T-cell (primary cell): ENCODE measurements at regions of chr5 and their contacts with region 1.

Region 1: GRCh38 chr5:42514754-42515153 is 91.5 kb downstream of the GHR start:
- DNase-seq: peak in 1 of 35 experiments; percentile 22
- ATAC-seq: no peak
- H3K4me3 ChIP-seq: no peak overlapping the region
- H3K4me3 Mint-ChIP-seq: no peak overlapping the region
- H3K27ac ChIP-seq: no peak overlapping the region
- H3K27ac Mint-ChIP-seq: no peak overlapping the region
- H3K4me1 ChIP-seq: no peaks in the 10 kb centered on the region
- H3K4me1 Mint-ChIP-seq: no peaks in the 10 kb centered on the region
- H3K27me3 ChIP-seq: no peaks in the 10 kb centered on the region
- H3K27me3 Mint-ChIP-seq: peaks cover 2 to 3% of the 10 kb centered on the region in 2 donors

Region 2: DNA sequence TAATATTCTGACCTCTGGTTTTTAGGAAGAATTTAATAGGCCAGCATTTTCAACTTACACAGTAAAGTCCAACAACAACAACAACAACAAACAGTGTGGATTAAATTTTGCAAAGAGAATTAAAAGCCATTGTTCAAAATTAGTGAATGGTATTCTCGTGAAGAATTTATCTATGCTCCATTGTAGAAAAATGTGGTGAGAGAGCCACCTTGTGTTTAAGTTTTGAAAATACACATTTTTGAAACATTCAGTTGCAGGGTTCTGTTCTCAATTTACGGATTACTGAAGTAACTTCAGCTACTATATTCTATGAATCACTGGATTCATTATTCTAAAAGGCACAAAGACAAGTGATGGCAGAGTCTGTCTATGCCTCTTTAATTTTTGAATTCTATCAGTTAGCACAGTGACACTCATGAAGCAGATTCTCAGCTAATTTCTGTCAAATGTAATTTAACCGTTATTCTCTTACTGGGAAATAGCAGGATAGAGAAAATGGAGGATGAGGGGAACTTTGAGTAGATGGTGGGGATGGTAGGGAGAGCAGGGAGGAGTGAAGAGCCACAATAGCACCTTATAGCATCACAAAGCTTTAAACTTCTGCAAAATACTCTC is 252.8 kb after region 1 on chr5:
- CTCF ChIA-PET with region 1: interaction called in 1 of 2 experiments, 14 read pairs
- POLR2A ChIA-PET with region 1: no interaction called
- DNase-seq: peak in 1 of 35 experiments; percentile 42
- ATAC-seq: no peak
- H3K4me3 ChIP-seq: no peak overlapping the region
- H3K4me3 Mint-ChIP-seq: no peak overlapping the region
- H3K27ac ChIP-seq: no peak overlapping the region
- H3K27ac Mint-ChIP-seq: no peak overlapping the region
- H3K4me1 ChIP-seq: no peaks in the 10 kb centered on the region
- H3K4me1 Mint-ChIP-seq: peaks cover 0 to 4% (median 0%) of the 10 kb centered on the region in 3 donors
- H3K27me3 ChIP-seq: no peaks in the 10 kb centered on the region
- H3K27me3 Mint-ChIP-seq: peaks cover 5 to 11% of the 10 kb centered on the region in 2 donors